Cardiac septum (tissue), 1 donor: ENCODE measurements at regions of chr5 and their contacts with region 1.

Region 1: DNA sequence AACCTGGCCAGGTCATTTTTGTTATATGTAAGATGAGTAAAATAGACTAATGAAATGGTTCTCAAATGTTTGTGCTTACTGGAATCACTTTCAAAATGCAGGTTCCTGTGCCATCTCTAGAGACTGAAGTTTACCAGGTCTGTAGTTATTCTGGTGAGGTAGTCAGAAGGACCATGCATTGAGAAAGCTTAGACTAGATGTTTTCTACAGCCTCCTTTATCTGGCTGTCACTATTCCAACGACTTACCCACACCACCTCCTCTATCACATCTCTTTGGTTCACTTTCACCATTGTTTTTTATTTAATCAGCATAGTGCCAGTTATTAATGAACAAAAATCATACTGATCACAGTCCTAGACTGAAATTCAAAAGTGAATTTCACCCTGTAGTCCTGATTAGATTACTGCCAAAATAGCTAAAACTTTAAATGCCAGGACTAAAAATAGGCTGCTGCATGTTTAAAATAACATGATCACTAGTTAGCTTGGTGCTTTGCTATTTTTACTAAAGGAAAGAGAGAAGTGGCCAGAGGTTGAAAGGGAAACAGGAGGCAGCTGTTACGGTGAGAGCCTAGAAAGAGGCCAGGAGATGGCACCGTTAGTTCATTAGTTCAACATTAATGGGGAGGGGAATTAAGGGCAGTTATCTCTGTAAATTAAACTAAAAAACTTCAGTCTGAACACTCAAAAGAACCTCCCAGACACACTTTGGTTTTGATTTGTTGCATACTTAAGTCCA is 13.9 kb upstream of the FNIP1 start:
- DNase-seq: no peak

Region 2: GRCh38 chr5:131589510-131590348 is 221.0 kb before region 1 on chr5:
- intact Hi-C with region 1: loop called (anchors 5 kb)
- DNase-seq: no peak

Region 3: GRCh38 chr5:132007399-132008165 is 196.9 kb after region 1 on chr5:
- intact Hi-C with region 1: loop called (anchors 1 kb)
- DNase-seq: peak; percentile 78

Region 4: DNA sequence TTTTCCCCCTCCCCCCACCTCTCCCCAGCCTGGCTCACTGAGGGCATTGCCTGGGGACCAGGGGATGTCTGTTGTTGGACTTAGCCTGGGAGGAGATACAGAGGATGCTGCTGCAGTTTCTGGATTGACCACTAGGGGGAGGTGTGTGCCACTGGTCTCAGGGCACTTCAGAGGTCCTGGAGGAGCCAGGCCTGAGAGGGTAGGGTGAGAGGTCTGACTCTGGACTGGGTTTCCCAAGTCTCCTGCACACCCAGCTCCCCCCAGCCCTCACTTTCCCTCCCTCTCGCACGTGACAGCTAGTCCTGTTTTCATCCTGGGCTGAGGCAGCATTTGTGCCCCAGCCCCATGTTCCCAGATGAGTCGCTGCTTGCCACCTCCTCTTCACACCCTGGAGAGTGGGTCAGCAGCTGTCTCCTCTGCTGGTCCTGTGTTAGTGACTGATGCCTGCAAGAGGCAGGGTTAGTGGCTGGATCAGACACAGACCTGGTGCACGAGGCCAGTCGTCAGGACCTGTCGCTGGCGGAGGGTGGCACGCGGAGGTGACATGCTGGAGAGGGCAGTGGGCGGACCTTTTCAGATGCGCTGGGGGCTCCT is 254.2 kb after region 1 on chr5:
- intact Hi-C with region 1: loop called (anchors 5 kb)
- DNase-seq: peak; percentile 76